Breast epithelium (tissue), 4 donors: ENCODE measurements at regions of chr6 and their contacts with region 1.

Region 1: DNA sequence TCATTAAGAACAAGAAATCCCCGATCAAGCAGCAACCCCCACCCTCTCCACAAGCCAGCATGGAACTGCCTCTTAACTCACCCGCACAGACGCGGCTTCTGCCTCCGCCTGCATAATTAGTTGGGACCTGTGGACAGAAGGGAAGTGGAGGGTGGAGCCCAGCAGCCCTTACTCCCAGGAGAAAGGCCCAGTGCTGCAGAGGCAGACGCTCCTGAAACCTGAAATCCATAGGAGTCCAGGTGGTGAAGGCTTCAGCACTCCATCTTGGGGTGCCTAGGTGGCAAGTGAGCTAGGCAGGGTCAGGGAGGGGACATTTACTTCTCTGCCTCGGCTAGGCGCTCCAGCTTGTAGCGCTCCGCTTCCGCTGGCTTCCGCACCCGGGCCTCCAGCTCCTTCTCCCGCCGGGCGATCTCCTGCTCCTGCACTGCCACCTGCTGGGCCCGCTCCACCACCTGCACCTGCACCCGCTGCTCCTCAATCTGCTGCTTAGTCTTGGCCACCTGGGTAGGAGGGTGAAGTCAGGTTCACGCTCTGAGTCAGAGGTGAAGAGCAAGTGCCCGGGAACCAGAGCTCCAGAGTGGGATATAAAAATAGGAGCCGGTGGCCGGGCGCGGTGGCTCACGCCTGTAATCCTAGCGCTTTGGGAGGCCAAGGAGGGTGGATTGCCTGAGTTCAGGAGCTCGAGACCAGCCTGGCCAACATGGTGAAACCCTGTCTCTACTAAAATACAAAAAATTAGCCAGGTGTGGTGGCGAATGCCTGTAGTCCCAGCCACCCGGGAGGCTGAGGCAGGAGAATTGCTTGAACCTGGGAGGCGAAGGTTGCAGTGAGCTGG is 10.7 kb downstream of the TUBB start:
- DNase-seq: peak; percentile 75 to 84
- H3K4me3 ChIP-seq: peak overlapping the region in 1 of 3 donors; percentile 12
- H3K27ac ChIP-seq: peak overlapping the region; percentile 41 to 44
- H3K4me1 ChIP-seq: no peaks in the 10 kb centered on the region
- H3K27me3 ChIP-seq: no peaks in the 10 kb centered on the region
- CTCF ChIP-seq: peak; percentile 51 to 86 (median 61)
- POLR2A ChIP-seq: no peak

Region 2: GRCh38 chr6:29743568-29743967 is 987.2 kb before region 1 on chr6:
- intact Hi-C with region 1: loop called (anchors 5 kb)
- DNase-seq: no peak
- H3K4me3 ChIP-seq: no peak overlapping the region
- H3K27ac ChIP-seq: no peak overlapping the region
- H3K4me1 ChIP-seq: peaks cover 0 to 8% of the 10 kb centered on the region in 2 donors
- H3K27me3 ChIP-seq: no peaks in the 10 kb centered on the region
- CTCF ChIP-seq: no peak
- POLR2A ChIP-seq: no peak

Region 3: DNA sequence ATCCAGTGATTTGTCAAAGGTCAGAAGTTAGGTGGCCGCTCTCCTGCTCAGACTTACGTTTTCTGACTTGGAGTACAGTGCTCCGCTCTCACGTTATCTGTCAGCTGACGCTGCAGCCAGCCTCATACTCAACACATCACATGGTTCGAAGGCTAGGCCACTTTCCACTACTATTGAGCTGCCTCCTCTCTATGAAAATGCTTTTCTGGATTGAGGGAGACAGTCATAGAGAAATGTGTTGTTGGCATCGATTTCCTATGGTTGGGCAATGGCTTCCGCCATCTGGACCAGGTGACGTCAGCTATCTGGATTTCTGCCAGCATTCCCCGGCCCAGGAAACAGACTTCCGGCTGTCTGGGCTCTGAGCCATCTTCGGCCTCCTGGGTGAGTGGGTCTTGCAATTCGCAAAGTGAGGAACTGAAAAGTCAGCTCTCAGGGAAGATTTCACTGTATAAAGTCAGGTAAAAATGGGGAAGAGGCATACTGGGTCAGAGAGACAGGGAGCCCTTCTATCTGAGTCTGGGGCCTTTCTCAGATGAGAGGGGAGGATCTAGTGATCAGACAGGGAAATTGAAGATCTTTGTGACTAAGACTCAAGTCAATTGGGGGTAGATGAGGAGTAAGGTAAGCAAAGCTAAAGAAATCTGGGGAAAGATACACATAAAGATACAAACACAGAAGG is 51.1 kb after region 1 on chr6:
- intact Hi-C with region 1: no loop called
- DNase-seq: peak; percentile 94 to 98
- H3K4me3 ChIP-seq: no peak overlapping the region
- H3K27ac ChIP-seq: peak overlapping the region; percentile 90 to 96
- H3K4me1 ChIP-seq: peaks cover 10 to 21% of the 10 kb centered on the region in 2 donors
- H3K27me3 ChIP-seq: no peaks in the 10 kb centered on the region
- CTCF ChIP-seq: no peak
- POLR2A ChIP-seq: no peak

Region 4: DNA sequence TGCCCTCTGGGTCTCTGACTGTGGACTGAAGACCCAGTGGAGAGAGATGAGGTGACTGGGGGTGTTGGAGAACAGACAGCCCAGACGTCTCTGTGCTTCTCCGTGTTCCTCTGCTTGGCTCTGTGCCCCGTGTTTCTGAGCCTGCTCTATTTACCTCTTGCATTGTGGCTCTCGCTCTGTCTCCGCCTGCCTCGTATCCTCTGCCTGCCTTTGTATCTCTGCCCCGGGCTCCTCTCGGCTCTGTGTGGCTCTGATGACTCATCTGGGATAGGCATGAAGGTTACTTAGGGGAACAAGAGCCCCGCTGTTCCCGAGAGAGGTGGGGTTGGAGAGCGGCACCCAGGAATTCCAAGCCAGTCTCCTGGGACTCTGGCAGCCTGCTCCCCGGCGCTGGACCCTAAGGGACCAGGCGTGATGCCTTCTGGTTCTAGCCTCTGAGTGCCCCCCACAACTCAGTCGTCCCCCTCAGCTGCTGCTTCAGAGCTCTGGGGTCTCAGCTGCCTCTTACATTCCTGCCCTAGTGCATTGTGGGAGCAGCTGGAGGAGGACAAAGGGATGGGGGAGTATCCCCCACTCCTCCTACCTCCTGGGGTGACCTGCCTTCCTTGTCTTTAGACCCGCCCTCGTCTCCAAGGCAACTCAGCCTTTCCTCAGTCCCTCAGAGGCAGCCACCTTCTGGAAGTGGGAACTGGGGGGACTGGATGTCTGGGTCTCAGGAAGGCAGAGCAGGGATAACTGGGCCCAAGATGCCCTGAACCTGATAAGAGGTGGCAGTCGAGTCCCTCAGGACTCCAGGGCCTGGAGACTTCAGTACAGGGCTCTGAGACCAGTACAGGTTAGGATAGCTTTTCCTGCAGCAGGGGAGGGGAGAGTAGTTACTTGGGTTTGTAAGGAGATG is 155.4 kb after region 1 on chr6:
- intact Hi-C with region 1: loop called (anchors 5 kb)
- DNase-seq: peak; percentile 93 to 97
- H3K4me3 ChIP-seq: peak overlapping the region; percentile 71 to 93 (median 84)
- H3K27ac ChIP-seq: peak overlapping the region; percentile 98
- H3K4me1 ChIP-seq: peaks cover 7 to 12% of the 10 kb centered on the region in 2 donors
- H3K27me3 ChIP-seq: no peaks in the 10 kb centered on the region
- CTCF ChIP-seq: no peak
- POLR2A ChIP-seq: no peak